ENCODE measurements at regions of chrX and their contacts with region 1.

Region 1: DNA sequence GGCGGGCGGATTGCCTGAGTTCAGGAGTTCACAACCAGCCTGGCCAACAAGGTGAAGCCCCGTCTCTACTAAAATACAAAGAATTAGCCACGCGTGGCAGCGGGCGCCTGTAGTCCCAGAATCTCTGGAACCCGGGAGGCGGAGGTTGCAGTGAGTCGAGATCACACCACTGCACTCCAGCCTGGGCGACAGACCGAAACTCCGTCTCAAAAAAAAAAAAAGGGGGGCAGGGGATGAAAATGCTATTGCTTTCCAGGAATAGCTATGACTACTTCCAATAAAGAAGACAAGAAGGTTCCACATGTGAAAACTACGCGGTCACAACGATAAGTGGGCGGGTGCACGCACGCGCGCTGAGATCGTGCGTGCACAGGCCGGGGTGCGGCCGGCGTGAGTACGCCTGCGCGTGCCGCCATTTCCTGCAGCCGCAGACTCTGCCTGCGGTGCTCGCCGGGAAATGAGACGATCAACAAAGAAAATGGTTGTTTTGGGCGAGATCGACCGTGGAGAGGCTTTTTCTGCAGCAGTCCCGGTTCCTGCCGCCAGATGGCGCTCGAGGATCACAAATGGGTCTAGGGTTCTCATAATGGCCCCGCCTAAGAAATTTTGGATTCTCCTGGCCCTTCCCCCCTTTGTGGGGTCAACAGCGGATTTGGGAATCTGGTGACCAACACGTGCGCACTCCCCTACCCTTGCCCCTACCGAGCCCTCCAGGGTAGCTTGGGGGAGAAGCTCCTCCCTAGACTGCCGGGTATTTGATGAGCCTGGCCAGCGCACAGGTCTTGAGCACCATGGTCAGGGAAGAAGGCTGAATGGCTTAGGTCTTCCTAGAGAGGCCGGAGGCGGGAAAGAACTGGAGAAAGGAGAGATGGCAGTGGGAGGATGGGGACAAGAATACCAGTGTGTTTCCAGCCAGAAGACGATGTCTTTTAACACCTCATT is 35.1 kb downstream of the PNMA5 start:
- DNase-seq: peak; percentile 87
- H3K4me3 ChIP-seq: peak overlapping the region in 2 of 4 donors; percentile 18 to 29
- H3K27ac ChIP-seq: peak overlapping the region; percentile 66 to 80 (median 74)
- H3K4me1 ChIP-seq: peaks cover 0 to 4% (median 0%) of the 10 kb centered on the region in 4 donors
- H3K27me3 ChIP-seq: no peaks in the 10 kb centered on the region
- CTCF ChIP-seq: peak; percentile 72 to 89 (median 88)
- EP300 ChIP-seq: no peak
- POLR2A ChIP-seq: no peak

Region 2: GRCh38 chrX:153190381-153190780 is 231.6 kb after region 1 on chrX:
- in situ Hi-C with region 1: no loop called
- intact Hi-C with region 1: no loop called
- DNase-seq: no peak
- H3K4me3 ChIP-seq: no peak overlapping the region
- H3K27ac ChIP-seq: no peak overlapping the region
- H3K4me1 ChIP-seq: no peaks in the 10 kb centered on the region
- H3K27me3 ChIP-seq: no peaks in the 10 kb centered on the region
- CTCF ChIP-seq: no peak
- EP300 ChIP-seq: no peak
- POLR2A ChIP-seq: no peak

Region 3: DNA sequence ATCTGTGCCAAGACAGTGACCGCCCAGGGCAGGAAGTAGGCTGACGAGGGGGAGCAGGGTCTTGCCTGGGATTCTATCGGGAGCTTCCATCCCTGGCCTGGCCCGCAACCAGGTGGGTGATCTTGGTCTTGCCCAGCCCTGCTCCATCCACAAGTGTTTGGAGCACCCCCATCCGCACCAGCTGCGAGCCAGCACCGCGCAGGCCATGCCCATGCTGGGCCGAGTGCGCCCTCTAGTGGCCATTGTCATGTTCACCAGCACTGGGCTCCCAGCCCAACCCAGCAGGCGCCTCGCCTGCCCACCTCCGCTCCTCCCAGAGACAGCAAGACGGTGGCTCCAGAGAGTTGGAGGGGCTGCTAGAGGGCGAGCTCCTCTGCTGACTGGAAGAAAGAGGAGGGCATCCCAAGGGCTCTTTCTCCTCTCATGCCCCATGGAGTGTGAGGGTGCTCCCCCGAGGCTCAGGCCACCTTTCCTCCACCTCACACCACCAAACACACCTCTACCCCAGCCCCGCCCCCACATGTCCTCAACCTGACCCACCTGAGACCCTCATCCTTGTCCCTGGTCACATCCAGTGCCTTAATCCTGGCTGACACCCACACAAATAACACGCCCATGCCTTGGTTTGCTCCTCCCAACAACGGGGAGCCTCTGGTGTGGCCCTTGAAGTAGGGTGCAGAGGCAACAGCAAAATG is 548.8 kb after region 1 on chrX:
- in situ Hi-C with region 1: loop called in 1 of 4 experiments (anchors 25 kb)
- intact Hi-C with region 1: no loop called
- DNase-seq: peak; percentile 83
- H3K4me3 ChIP-seq: no peak overlapping the region
- H3K27ac ChIP-seq: no peak overlapping the region
- H3K4me1 ChIP-seq: no peaks in the 10 kb centered on the region
- H3K27me3 ChIP-seq: no peaks in the 10 kb centered on the region
- CTCF ChIP-seq: peak; percentile 75 to 86 (median 76)
- EP300 ChIP-seq: no peak
- POLR2A ChIP-seq: no peak

Region 4: GRCh38 chrX:153667956-153668396 is 709.2 kb after region 1 on chrX:
- in situ Hi-C with region 1: loop called (anchors 25 kb)
- intact Hi-C with region 1: no loop called
- DNase-seq: peak; percentile 82
- H3K4me3 ChIP-seq: peak overlapping the region in 1 of 4 donors; percentile 14
- H3K27ac ChIP-seq: peak overlapping the region in 2 of 4 donors; percentile 34 to 51
- H3K4me1 ChIP-seq: peaks cover 0 to 2% (median 0%) of the 10 kb centered on the region in 4 donors
- H3K27me3 ChIP-seq: peaks cover 20% of the 10 kb centered on the region
- CTCF ChIP-seq: peak; percentile 54 to 71 (median 68)
- EP300 ChIP-seq: no peak
- POLR2A ChIP-seq: no peak

Region 5: DNA sequence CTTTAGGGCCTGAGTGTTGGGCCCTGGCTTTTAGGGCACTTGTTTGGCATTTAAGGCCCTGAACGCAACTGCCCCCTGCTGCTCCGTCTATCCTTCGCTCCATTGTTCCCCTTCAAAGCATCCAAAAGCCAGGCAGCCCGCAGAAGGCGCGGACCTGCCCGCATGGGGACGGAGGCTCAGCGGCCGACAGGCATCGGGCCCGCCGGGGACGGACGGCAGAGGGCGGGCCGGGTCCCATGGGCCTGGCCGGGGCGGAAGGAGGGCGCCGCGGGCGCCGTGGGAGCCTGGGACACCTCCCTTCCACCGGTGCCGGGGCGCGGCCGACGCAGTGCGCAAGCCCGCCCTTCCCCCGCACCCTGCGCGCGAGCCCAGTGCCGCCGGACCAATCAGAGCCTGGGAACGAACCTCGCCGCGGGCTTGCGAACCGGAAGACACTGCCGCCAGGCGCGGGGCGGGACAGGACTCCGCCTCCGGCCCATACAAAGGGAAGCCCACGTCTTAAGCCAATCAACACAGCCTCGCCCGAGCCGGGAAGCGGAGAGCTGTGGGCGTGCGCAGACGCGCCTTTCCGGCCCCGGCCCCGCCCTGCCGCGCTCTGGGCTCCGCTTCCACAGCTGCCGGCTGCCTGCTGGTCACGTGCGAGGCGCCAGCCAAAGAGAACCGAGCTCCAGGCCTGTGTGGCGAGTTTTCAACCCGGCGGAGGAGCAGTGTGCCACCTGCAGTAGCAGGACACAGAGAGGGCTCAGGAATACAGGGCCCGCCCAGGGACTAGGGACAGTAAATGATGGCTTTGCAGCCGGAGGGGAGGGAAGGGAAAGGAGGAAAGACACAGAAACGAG is 969.3 kb after region 1 on chrX:
- in situ Hi-C with region 1: loop called in 1 of 4 experiments (anchors 25 kb)
- intact Hi-C with region 1: no loop called
- DNase-seq: peak; percentile 96
- H3K4me3 ChIP-seq: peak overlapping the region; percentile 52 to 63 (median 53)
- H3K27ac ChIP-seq: peak overlapping the region; percentile 96 to 99 (median 98)
- H3K4me1 ChIP-seq: peaks cover 7 to 26% (median 16%) of the 10 kb centered on the region in 4 donors
- H3K27me3 ChIP-seq: no peaks in the 10 kb centered on the region
- CTCF ChIP-seq: no peak
- EP300 ChIP-seq: no peak
- POLR2A ChIP-seq: peak; percentile 65

Region 6: GRCh38 chrX:154534862-154535670 is 1576.3 kb after region 1 on chrX:
- in situ Hi-C with region 1: loop called in 1 of 4 experiments (anchors 25 kb)
- intact Hi-C with region 1: loop called (anchors 5 kb)
- DNase-seq: peak; percentile 92
- H3K4me3 ChIP-seq: no peak overlapping the region
- H3K27ac ChIP-seq: peak overlapping the region; percentile 26 to 65 (median 55)
- H3K4me1 ChIP-seq: peaks cover 0 to 5% (median 3%) of the 10 kb centered on the region in 4 donors
- H3K27me3 ChIP-seq: no peaks in the 10 kb centered on the region
- CTCF ChIP-seq: peak; percentile 85 to 98 (median 95)
- EP300 ChIP-seq: no peak
- POLR2A ChIP-seq: no peak